K562 (cell line): ENCODE measurements at regions of chr12 and their contacts with region 1.

Region 1: GRCh38 chr12:2944401-2945047 is 14.7 kb upstream of the TEAD4 start:
- DNase-seq: peak; percentile 60 to 69 (median 64)
- ATAC-seq: peak; percentile 90
- H3K4me3 ChIP-seq: no peak overlapping the region
- H3K27ac ChIP-seq: no peak overlapping the region; the same call in 2 of the 3 replicates
- H3K4me1 ChIP-seq: peaks cover 5 to 6% of the 10 kb centered on the region in 2 experiments; a peak in 3 of 5 replicates
- H3K27me3 ChIP-seq: no peaks in the 10 kb centered on the region
- CTCF ChIP-seq: peak; percentile 78 to 85 (median 81)
- EP300 ChIP-seq: no peak
- POLR2A ChIP-seq: no peak
- RAD21 ChIP-seq: peak; percentile 40 to 77; a peak in 3 of 4 replicates

Region 2: DNA sequence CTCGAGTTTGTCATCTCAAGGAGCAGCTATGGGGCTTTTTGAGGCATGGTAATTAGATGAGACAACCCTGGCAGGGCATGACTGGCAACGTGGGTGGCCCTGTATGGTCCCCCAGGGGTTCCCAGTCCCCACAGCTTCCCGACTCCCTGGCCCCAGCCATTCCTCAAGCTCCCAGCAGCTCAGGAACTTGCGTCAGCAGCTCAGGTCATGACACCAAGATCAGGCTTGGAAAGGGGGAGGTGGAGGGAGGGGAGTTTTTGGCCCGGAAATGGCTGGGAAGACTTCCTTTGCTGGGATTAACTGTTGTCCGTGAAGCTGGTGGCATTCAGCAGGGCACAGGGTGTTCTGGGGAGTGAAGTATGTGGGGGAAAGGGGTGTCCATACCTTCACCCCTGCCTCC is 99.2 kb before region 1 on chr12:
- CTCF ChIA-PET with region 1: no interaction called
- POLR2A ChIA-PET with region 1: no interaction called
- in situ Hi-C with region 1: no loop called
- intact Hi-C with region 1: loop called (anchors 1 kb)
- DNase-seq: peak in 1 of 4 experiments; percentile 24
- ATAC-seq: peak; percentile 50
- H3K4me3 ChIP-seq: no peak overlapping the region
- H3K27ac ChIP-seq: no peak overlapping the region; the same call in 2 of the 3 replicates
- H3K4me1 ChIP-seq: peaks cover 8% of the 10 kb centered on the region in 2 experiments; a peak in 4 of 5 replicates
- H3K27me3 ChIP-seq: no peaks in the 10 kb centered on the region
- CTCF ChIP-seq: no peak
- EP300 ChIP-seq: no peak
- POLR2A ChIP-seq: no peak
- RAD21 ChIP-seq: no peak

Region 3: DNA sequence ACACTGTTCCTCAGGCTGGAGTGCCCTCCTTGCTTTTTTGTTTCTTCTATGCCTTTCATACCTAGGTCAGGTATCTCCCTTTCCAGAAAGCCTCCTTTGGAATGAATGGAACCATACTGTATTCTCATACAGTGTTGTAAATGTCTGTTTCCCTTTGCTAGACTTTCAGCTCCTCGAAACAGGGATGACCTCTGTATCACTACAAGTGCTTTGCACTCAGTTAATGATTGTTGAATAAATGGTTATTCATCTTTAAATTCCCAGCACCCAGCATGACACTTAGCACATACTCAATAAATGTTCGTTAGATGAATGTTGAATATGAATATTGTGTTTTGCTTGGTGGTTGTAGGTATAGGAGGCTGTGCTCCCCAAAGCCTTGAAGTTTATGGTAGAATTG is 59.7 kb before region 1 on chr12:
- CTCF ChIA-PET with region 1: no interaction called
- POLR2A ChIA-PET with region 1: no interaction called
- in situ Hi-C with region 1: no loop called
- intact Hi-C with region 1: loop called (anchors 2 kb)
- DNase-seq: no peak
- ATAC-seq: no peak; the same call in 2 of the 3 replicates
- H3K4me3 ChIP-seq: no peak overlapping the region
- H3K27ac ChIP-seq: no peak overlapping the region
- H3K4me1 ChIP-seq: no peaks in the 10 kb centered on the region; a peak in 3 of 5 replicates
- H3K27me3 ChIP-seq: no peaks in the 10 kb centered on the region
- CTCF ChIP-seq: no peak
- EP300 ChIP-seq: no peak
- POLR2A ChIP-seq: no peak
- RAD21 ChIP-seq: no peak